GM13976 (cell line): ENCODE measurements at regions of chr17 and their contacts with region 1.

Region 1: GRCh38 chr17:59311130-59311920 is 20.1 kb upstream of the YPEL2 start:
- DNase-seq: peak; percentile 78
- CTCF ChIP-seq: peak; percentile 52

Region 2: GRCh38 chr17:59165902-59166342 is 145.4 kb before region 1 on chr17:
- in situ Hi-C with region 1: no loop called
- DNase-seq: peak; percentile 55
- CTCF ChIP-seq: peak; percentile 36

Region 3: DNA sequence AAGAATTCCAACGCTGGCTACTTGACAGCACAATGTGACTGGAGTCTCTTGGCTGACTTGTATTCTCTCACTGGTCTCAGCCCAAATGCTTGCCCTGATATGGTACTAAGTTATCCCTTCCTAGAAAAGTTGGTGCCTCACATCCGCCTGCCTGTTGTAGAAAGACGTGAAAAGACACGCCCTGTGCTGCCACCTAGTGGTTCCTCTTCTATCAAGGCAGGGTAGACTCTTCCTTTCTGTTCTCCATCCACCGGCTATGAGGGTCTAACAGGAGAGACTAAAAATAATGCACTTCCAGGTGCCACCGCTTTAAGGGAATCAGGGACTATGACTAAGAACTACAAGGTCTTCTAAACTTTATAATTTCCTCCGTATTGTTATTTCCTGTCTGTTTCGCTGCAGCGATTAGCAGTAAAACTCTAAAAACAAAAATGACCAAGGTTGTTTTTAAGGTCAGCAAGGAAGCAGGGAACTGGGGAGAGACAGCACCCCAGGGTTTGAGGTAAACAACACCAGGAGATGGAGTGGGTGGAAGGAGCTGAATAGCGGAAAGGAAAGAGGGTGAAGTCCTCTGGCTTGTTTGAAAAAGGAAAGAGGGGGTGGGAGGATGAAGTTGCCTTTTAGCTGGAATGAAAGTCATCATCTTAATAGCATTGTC is 129.6 kb after region 1 on chr17:
- in situ Hi-C with region 1: loop called (anchors 5 kb)
- DNase-seq: peak; percentile 78
- CTCF ChIP-seq: peak; percentile 67

Region 4: GRCh38 chr17:60036796-60037612 is 725.7 kb after region 1 on chr17:
- in situ Hi-C with region 1: loop called (anchors 25 kb)
- DNase-seq: peak; percentile 77
- CTCF ChIP-seq: peak; percentile 97